Activated T-helper 1 cell treated with anti-CD3 and anti-CD28 coated beads, Interleukin-12 subunit alpha, Interleukin-12 subunit beta, Interleukin-2, Interleukin-4 antibody, amounts not matched to agents 30 ng/mL and 10 ng/mL and 1 ng/mL, durations not matched to agents 14 hours and 24 hours and 36 hours (primary cell): ENCODE measurements at regions of chr12 and their contacts with region 1.

Region 1: GRCh38 chr12:51531978-51532497 is 59.0 kb upstream of the SCN8A start:
- DNase-seq: peak; percentile 68
- H3K4me3 Mint-ChIP-seq: no peak overlapping the region
- H3K27ac Mint-ChIP-seq: no peak overlapping the region
- H3K4me1 Mint-ChIP-seq: peaks cover 8% of the 10 kb centered on the region
- H3K27me3 Mint-ChIP-seq: peaks cover 11% of the 10 kb centered on the region

Region 2: GRCh38 chr12:51482929-51483697 is 48.9 kb before region 1 on chr12:
- intact Hi-C with region 1: loop called (anchors 5 kb)
- DNase-seq: peak; percentile 11
- H3K4me3 Mint-ChIP-seq: peak overlapping the region; percentile 76
- H3K27ac Mint-ChIP-seq: peak overlapping the region; percentile 96
- H3K4me1 Mint-ChIP-seq: peaks cover 47% of the 10 kb centered on the region
- H3K27me3 Mint-ChIP-seq: peaks cover 4% of the 10 kb centered on the region

Region 3: DNA sequence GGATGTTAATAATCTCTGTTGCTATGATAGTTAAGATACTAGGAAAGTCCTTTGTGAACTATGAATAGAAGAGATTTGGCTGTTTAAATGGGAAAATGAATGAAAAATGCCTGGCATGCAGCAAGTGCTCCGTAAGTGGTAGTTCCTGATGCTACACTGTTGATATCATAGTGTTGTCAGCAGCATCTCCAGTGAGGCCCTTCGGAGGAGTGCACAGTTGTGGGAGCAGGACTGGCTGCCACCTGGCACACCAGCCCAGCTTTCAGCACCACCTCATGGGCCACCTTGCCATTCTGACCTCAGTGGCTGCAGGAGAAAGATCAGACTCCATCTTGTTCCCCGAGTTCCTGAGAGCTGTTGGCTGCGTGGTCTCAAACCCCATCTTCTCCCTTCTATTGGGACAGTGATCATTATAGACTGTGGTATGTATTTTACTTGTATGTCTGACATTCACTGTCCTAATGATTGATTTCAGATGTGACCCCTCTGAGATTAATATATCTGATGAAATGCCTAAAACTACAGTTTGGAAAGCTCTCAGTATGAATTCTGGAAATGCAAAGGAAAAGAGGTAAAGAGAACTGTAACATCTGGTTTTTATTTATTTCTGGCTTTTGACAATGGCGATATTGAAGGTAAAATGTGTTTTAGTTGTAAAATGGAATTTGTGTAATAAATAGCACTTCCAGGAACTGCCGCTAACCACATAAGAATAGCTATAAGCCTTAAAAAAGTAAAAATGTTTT is 26.5 kb before region 1 on chr12:
- intact Hi-C with region 1: no loop called
- DNase-seq: no peak
- H3K4me3 Mint-ChIP-seq: no peak overlapping the region
- H3K27ac Mint-ChIP-seq: no peak overlapping the region
- H3K4me1 Mint-ChIP-seq: no peaks in the 10 kb centered on the region
- H3K27me3 Mint-ChIP-seq: peaks cover 8% of the 10 kb centered on the region

Region 4: GRCh38 chr12:51590347-51591019 is 58.4 kb after region 1 on chr12:
- intact Hi-C with region 1: loop called (anchors 1 kb)
- DNase-seq: peak; percentile 72
- H3K4me3 Mint-ChIP-seq: peak overlapping the region; percentile 88
- H3K27ac Mint-ChIP-seq: peak overlapping the region; percentile 77
- H3K4me1 Mint-ChIP-seq: peaks cover 10% of the 10 kb centered on the region
- H3K27me3 Mint-ChIP-seq: peaks cover 61% of the 10 kb centered on the region

Region 5: DNA sequence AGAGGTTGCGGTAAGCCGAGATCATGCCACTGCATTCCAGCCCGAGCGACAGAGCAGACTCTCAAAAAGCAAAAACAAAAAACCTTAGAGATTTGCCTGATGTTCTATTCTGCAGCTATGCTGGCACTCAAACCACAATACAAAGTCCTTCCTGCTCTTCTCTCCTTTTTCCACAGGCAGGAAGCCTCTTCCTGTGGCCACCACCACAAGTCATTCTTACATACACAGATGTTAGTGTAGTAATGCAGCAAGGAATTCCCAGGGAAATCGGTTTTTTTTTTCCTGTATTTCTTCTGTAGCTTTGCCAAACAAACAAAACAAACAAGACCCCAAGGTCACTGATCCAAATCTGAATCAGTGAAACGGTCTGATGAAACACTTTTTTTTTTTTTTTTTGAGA is 212.2 kb after region 1 on chr12:
- intact Hi-C with region 1: no loop called
- DNase-seq: no peak
- H3K4me3 Mint-ChIP-seq: no peak overlapping the region
- H3K27ac Mint-ChIP-seq: no peak overlapping the region
- H3K4me1 Mint-ChIP-seq: no peaks in the 10 kb centered on the region
- H3K27me3 Mint-ChIP-seq: peaks cover 21% of the 10 kb centered on the region

Region 6: DNA sequence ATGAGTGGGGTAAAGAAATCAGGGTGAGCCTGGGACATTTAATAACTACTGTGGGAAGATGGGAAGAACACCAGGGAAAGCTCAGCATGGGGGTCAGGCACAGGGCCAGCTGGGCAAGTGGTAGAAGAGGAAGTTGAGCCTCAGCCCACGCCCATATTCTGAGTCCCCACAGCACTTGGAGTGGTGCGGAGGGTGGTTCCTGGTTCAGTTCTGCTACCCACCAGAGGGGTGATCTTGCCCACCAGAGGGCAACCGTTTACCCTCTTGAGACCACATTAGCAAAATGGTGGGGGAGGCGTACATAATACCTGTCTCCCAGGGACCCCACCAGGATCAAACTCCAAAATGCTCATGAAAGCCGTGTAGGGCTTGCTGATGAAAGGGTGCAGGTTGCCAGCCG is 339.1 kb after region 1 on chr12:
- intact Hi-C with region 1: loop called (anchors 1 kb)
- DNase-seq: no peak
- H3K4me3 Mint-ChIP-seq: no peak overlapping the region
- H3K27ac Mint-ChIP-seq: no peak overlapping the region
- H3K4me1 Mint-ChIP-seq: peaks cover 12% of the 10 kb centered on the region
- H3K27me3 Mint-ChIP-seq: peaks cover 55% of the 10 kb centered on the region